Endothelial cell of umbilical vein (primary cell): ENCODE measurements at regions of chr1 and their contacts with region 1.

Region 1: GRCh38 chr1:31689821-31690220 is 14.0 kb downstream of the COL16A1 start:
- DNase-seq: peak; percentile 67
- H3K4me3 ChIP-seq: no peak overlapping the region
- H3K27ac ChIP-seq: peak overlapping the region; percentile 85
- H3K4me1 ChIP-seq: peaks cover 13% of the 10 kb centered on the region
- H3K27me3 ChIP-seq: no peaks in the 10 kb centered on the region
- CTCF ChIP-seq: no peak
- POLR2A ChIP-seq: no peak

Region 2: GRCh38 chr1:31669786-31670592 is 19.8 kb before region 1 on chr1:
- CTCF ChIA-PET with region 1: interaction called, 6 read pairs
- POLR2A ChIA-PET with region 1: no interaction called
- dilution Hi-C with region 1: no loop called
- intact Hi-C with region 1: loop called (anchors 2 kb)
- DNase-seq: peak; percentile 77
- H3K4me3 ChIP-seq: peak overlapping the region; percentile 7 to 31 (median 21)
- H3K27ac ChIP-seq: no peak overlapping the region
- H3K4me1 ChIP-seq: peaks cover 13% of the 10 kb centered on the region
- H3K27me3 ChIP-seq: no peaks in the 10 kb centered on the region
- CTCF ChIP-seq: peak; percentile 10 to 29
- POLR2A ChIP-seq: no peak

Region 3: GRCh38 chr1:31788138-31788824 is 98.5 kb after region 1 on chr1:
- CTCF ChIA-PET with region 1: no interaction called
- POLR2A ChIA-PET with region 1: no interaction called
- dilution Hi-C with region 1: no loop called
- intact Hi-C with region 1: no loop called
- DNase-seq: peak; percentile 84
- H3K4me3 ChIP-seq: peak overlapping the region; percentile 4 to 78 (median 55)
- H3K27ac ChIP-seq: peak overlapping the region; percentile 32
- H3K4me1 ChIP-seq: peaks cover 4% of the 10 kb centered on the region
- H3K27me3 ChIP-seq: no peaks in the 10 kb centered on the region
- CTCF ChIP-seq: no peak
- POLR2A ChIP-seq: peak; percentile 65